ENCODE measurements at regions of chr1 and their contacts with region 1.

Region 1: GRCh38 chr1:182054698-182055326 is 6.7 kb downstream of the ZNF648 start:
- DNase-seq: peak; percentile 56
- CTCF ChIP-seq: peak; percentile 81

Region 2: DNA sequence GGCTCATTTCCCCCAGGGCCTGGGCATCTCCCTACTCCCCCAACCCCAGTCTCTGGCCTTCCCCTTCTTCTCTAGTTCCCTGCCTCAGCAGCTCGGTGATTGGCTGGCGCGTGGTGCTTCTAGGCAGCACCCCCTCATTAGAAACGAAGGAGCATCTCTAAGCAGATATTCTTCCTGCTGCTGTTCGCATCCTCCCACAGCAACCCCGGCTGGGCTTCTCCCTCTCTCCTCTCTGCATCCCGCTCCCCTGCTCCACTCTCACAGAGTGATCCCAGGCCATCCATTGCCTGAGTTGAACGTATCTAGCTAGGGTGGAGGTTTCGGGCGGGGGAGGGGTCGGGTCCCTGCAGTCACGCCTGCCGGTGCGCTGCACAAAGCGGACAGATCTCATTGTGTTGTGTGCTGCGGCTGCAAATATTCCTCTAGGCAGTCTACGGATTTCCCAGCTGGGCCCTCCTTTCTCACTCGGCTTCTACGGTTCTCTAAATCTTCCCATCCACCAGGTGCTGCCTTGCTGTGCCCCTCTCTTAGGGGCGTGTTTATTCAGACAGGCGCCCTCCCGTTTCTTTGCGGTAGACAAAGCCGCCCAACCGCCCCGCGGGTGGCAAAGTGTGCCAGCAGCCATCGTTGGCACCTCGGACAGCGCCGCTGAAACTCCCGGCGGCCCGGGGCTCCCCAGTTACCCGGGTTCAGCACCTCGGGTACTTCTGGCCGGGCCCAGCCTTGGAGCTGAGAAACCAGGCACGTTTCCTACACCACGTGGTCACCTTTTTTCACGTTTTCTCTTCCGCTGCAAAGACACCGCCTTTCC is 569.3 kb before region 1 on chr1:
- CTCF ChIA-PET with region 1: interaction called, 65 read pairs
- POLR2A ChIA-PET with region 1: no interaction called
- DNase-seq: peak; percentile 79
- CTCF ChIP-seq: no peak

Region 3: GRCh38 chr1:182069028-182069466 is 14.2 kb after region 1 on chr1:
- CTCF ChIA-PET with region 1: interaction called, 47 read pairs
- POLR2A ChIA-PET with region 1: no interaction called
- DNase-seq: peak; percentile 67
- CTCF ChIP-seq: peak; percentile 87